CD4-positive, alpha-beta memory T cell (primary cell): ENCODE measurements at regions of chr10 and their contacts with region 1.

Region 1: GRCh38 chr10:63720072-63720537 is 198.9 kb downstream of the REEP3 start:
- DNase-seq: peak; percentile 64 to 69 (median 67)
- H3K4me3 ChIP-seq: no peak overlapping the region
- H3K4me3 Mint-ChIP-seq: no peak overlapping the region
- H3K27ac ChIP-seq: no peak overlapping the region
- H3K27ac Mint-ChIP-seq: peak overlapping the region in 4 of 7 donors; percentile 40 to 76 (median 60)
- H3K4me1 ChIP-seq: peaks cover 6% of the 10 kb centered on the region
- H3K4me1 Mint-ChIP-seq: peaks cover 4 to 8% (median 6%) of the 10 kb centered on the region in 4 donors
- H3K27me3 ChIP-seq: no peaks in the 10 kb centered on the region
- H3K27me3 Mint-ChIP-seq: peaks cover 0 to 2% of the 10 kb centered on the region in 2 donors

Region 2: GRCh38 chr10:62437696-62438095 is 1282.4 kb before region 1 on chr10:
- CTCF ChIA-PET with region 1: interaction called, 16 read pairs
- POLR2A ChIA-PET with region 1: no interaction called
- intact Hi-C with region 1: loop called (anchors 1 kb)
- DNase-seq: peak; percentile 40 to 66 (median 62)
- H3K4me3 ChIP-seq: no peak overlapping the region
- H3K4me3 Mint-ChIP-seq: no peak overlapping the region
- H3K27ac ChIP-seq: no peak overlapping the region
- H3K27ac Mint-ChIP-seq: no peak overlapping the region
- H3K4me1 ChIP-seq: no peaks in the 10 kb centered on the region
- H3K4me1 Mint-ChIP-seq: peaks cover 0 to 5% (median 0%) of the 10 kb centered on the region in 4 donors
- H3K27me3 ChIP-seq: no peaks in the 10 kb centered on the region
- H3K27me3 Mint-ChIP-seq: no peaks in the 10 kb centered on the region

Region 3: DNA sequence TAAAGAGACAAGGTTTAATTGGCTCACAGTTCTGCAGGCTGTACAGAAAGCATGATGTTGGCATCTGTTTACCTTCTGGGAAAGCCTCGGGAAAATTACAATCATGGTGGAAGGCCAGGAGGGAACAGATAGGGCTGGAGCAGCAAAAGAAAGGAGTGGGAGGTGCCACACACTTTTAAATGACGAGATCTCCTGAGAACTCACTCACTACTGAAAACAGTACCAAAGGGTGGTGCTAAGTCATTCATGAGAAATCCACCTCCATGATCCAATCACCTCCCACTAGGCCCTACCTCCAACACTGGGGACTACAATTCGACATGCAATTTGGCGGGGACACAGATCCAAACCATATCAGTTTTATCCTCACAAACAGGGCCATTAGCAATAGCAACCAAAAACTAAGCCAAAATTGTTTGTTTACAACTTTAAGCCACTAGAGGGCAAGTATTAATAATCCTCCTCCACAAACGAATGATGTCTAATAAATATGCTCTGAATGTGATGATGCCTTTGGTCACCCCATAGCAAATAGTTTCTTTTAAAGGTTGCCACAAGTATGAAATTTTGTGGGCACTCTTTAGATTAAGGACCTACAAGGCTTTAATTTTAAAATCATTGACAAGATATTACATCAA is 716.2 kb before region 1 on chr10:
- CTCF ChIA-PET with region 1: no interaction called
- POLR2A ChIA-PET with region 1: no interaction called
- intact Hi-C with region 1: loop called (anchors 5 kb)
- DNase-seq: peak in 1 of 5 donors; percentile 6
- H3K4me3 ChIP-seq: no peak overlapping the region
- H3K4me3 Mint-ChIP-seq: no peak overlapping the region
- H3K27ac ChIP-seq: no peak overlapping the region
- H3K27ac Mint-ChIP-seq: no peak overlapping the region
- H3K4me1 ChIP-seq: no peaks in the 10 kb centered on the region
- H3K4me1 Mint-ChIP-seq: peaks cover 0 to 1% (median 0%) of the 10 kb centered on the region in 4 donors
- H3K27me3 ChIP-seq: no peaks in the 10 kb centered on the region
- H3K27me3 Mint-ChIP-seq: peaks cover 4 to 20% of the 10 kb centered on the region in 2 donors

Region 4: DNA sequence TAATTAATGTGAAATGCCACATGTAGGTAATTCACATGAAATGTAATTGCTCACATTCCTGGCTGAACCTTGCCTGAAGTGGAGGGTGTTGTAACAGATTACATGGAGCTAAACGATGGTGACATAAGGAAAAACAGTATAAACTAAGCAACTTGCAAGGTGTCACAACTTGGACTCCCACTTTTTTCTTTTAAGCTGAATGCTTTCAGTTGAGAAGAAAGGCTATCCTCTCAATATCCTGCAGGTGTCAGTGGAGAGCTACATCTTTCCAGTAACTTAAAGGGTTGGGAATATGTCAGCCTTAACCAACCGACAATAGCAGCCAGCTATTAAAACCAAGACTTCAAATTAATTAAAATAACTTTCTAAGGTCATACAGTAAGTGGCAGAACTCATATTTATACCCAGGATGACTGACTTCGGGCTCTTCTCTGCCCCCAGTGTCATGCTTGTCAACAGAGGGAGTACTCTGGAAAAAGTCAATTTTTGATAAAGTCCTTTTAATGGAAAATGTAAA is 553.3 kb before region 1 on chr10:
- CTCF ChIA-PET with region 1: interaction called, 407 read pairs
- POLR2A ChIA-PET with region 1: interaction called, 12 read pairs
- intact Hi-C with region 1: loop called (anchors 1 kb)
- DNase-seq: peak; percentile 50 to 61 (median 56)
- H3K4me3 ChIP-seq: no peak overlapping the region
- H3K4me3 Mint-ChIP-seq: no peak overlapping the region
- H3K27ac ChIP-seq: no peak overlapping the region
- H3K27ac Mint-ChIP-seq: peak overlapping the region in 2 of 7 donors; percentile 36 to 67
- H3K4me1 ChIP-seq: no peaks in the 10 kb centered on the region
- H3K4me1 Mint-ChIP-seq: peaks cover 0 to 2% (median 1%) of the 10 kb centered on the region in 4 donors
- H3K27me3 ChIP-seq: no peaks in the 10 kb centered on the region
- H3K27me3 Mint-ChIP-seq: no peaks in the 10 kb centered on the region

Region 5: DNA sequence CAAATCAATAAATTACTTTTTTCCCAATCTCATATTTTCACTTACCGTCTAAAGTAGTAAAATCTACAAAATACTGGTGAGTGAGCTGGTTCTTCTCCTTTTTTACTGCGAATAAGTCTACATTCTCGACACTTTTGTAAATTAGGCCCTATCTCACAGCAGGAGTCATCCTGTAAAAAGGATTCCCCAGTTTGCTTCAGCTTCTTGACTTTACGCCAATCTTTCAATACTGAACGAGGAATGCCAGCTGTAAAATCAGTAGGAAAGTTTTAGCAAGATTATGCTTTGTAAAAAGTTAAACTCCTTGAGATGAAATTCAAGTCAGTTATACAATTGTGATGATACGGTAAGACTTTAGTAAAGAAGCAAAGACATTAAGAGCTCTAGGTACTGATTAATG is 519.7 kb before region 1 on chr10:
- CTCF ChIA-PET with region 1: interaction called, 12 read pairs
- POLR2A ChIA-PET with region 1: no interaction called
- intact Hi-C with region 1: no loop called
- DNase-seq: no peak
- H3K4me3 ChIP-seq: no peak overlapping the region
- H3K4me3 Mint-ChIP-seq: no peak overlapping the region
- H3K27ac ChIP-seq: no peak overlapping the region
- H3K27ac Mint-ChIP-seq: no peak overlapping the region
- H3K4me1 ChIP-seq: peaks cover 12% of the 10 kb centered on the region
- H3K4me1 Mint-ChIP-seq: peaks cover 12 to 19% (median 14%) of the 10 kb centered on the region in 4 donors
- H3K27me3 ChIP-seq: no peaks in the 10 kb centered on the region
- H3K27me3 Mint-ChIP-seq: no peaks in the 10 kb centered on the region

Region 6: DNA sequence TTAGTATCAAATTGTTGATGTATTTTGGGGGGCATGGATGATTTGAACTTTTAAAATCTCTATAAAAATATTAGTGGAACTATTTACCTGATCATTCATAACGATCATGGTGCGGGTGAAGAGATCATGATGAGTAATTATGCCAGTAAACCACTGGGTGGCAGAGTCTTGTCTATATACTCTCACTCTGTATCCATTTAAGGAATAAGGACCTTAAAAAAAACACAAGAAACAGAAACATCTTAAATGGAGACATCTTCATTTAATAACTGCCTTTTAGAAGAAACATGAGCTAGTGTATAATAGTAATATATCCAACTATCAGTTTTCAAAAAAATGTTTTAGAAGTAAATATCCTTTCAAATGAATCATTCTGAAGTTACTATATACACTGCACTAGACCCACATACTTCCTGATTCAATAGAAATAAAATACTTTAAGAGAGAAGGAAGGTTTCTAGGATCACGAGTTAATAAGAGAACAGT is 502.9 kb before region 1 on chr10:
- CTCF ChIA-PET with region 1: interaction called, 57 read pairs
- POLR2A ChIA-PET with region 1: interaction called, 3 read pairs
- intact Hi-C with region 1: loop called (anchors 1 kb)
- DNase-seq: peak in 4 of 5 donors; percentile 60 to 68 (median 64)
- H3K4me3 ChIP-seq: no peak overlapping the region
- H3K4me3 Mint-ChIP-seq: peak overlapping the region in 4 of 8 donors; percentile 3 to 61 (median 24)
- H3K27ac ChIP-seq: no peak overlapping the region
- H3K27ac Mint-ChIP-seq: peak overlapping the region in 6 of 7 donors; percentile 25 to 81 (median 68)
- H3K4me1 ChIP-seq: peaks cover 50% of the 10 kb centered on the region
- H3K4me1 Mint-ChIP-seq: peaks cover 41 to 61% (median 43%) of the 10 kb centered on the region in 4 donors
- H3K27me3 ChIP-seq: no peaks in the 10 kb centered on the region
- H3K27me3 Mint-ChIP-seq: no peaks in the 10 kb centered on the region

Region 7: DNA sequence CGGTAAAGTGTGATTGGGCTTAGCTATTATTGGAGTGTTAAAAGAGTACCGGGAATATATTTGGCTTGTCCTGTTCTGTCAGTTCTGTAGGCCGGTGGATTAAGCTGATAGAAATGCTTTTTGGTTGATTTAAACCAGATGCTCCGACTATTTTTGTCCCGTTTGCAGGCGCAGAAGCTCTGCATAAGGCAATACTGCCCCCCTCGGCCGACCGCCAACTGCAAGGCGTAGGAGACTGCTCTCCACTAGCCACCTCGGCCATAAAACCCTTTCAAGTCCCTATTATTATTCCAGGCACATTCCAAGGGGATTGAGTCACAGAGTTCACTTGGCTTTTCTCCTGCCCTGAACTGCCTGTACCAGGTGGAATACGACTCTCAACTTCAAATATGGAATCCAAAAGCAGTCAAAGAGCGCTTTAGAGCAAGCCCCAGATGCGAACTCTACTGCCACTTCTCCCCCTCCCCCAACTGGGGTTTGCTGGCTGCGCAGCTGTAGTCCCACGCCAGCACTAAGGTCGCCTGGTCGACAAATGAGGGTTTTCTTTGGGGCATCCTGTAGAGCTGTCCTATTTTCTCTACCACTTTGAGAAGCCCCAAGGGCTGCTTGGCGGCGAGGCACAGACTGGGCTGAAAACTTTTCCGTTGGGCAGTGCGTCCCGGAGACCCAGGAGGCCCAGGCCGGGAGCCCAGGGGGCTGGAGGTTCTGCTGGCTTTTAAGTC is 90.6 kb before region 1 on chr10:
- CTCF ChIA-PET with region 1: interaction called, 77 read pairs
- POLR2A ChIA-PET with region 1: interaction called, 5 read pairs
- intact Hi-C with region 1: loop called (anchors 1 kb)
- DNase-seq: peak; percentile 76 to 81 (median 77)
- H3K4me3 ChIP-seq: peak overlapping the region; percentile 59 to 70
- H3K4me3 Mint-ChIP-seq: peak overlapping the region; percentile 92 to 97 (median 95)
- H3K27ac ChIP-seq: peak overlapping the region; percentile 55
- H3K27ac Mint-ChIP-seq: peak overlapping the region; percentile 57 to 96 (median 92)
- H3K4me1 ChIP-seq: peaks cover 28% of the 10 kb centered on the region
- H3K4me1 Mint-ChIP-seq: peaks cover 17 to 29% (median 22%) of the 10 kb centered on the region in 4 donors
- H3K27me3 ChIP-seq: no peaks in the 10 kb centered on the region
- H3K27me3 Mint-ChIP-seq: no peaks in the 10 kb centered on the region